ENCODE measurements at regions of chr3 and their contacts with region 1.

Region 1: GRCh38 chr3:14537590-14538447 is 2.3 kb downstream of the GRIP2 start:
- DNase-seq: no peak

Region 2: GRCh38 chr3:14482271-14482721 is 55.5 kb before region 1 on chr3:
- intact Hi-C with region 1: no loop called
- DNase-seq: no peak

Region 3: GRCh38 chr3:14524311-14524711 is 13.5 kb before region 1 on chr3:
- intact Hi-C with region 1: loop called (anchors 2 kb)
- DNase-seq: peak; percentile 90

Measured in cardiac septum (tissue), 1 donor.